Activated naive CD4-positive, alpha-beta T cell treated with anti-CD3 and anti-CD28 coated beads for 36 hours (primary cell): ENCODE measurements at regions of chr3 and their contacts with region 1.

Region 1: DNA sequence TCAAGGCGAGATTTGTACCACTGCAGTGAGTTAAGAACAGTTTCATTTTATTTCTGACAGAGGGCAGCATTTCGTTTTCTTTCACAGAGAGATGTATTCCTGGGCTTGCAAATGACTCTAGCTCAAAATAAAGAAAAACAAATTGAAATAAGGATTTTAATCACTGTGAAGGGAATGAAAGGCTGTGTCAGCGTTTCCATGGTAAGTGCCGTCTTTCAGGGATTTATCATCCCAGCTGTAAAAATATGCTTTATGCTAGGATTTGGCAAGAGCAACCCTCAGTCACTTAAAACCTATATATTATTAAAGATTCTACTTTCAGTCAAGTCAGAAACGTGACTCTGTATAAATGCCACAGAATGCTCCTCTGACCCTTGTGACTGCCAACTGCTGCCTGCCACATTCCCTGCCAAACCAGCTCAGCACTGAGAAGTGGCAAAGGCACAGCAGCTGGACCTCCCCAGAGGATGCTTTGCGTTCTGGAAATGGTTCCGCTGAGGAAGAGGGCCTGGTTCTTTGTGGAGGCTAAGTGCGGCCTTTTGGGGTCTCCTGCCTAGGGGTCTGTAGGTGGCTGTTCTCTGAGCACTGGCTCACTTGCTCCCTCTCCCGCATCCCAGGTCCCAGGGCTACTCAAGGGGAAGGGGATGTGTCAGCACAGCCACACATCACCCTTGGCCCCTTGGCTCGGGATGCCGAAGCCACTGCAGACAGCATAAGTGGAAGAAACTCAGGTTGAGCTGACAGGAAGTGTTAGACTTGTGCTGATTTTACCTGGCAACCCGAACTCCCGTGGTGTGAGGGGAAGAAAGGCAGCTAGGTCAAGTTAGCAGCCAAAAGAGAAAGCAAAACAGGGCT is 56.6 kb upstream of the POMGNT2 start:
- DNase-seq: peak; percentile 69
- H3K4me3 Mint-ChIP-seq: peak overlapping the region; percentile 58
- H3K27ac Mint-ChIP-seq: peak overlapping the region; percentile 69
- H3K4me1 Mint-ChIP-seq: peaks cover 18% of the 10 kb centered on the region
- H3K27me3 Mint-ChIP-seq: no peaks in the 10 kb centered on the region

Region 2: GRCh38 chr3:43181202-43181821 is 18.9 kb after region 1 on chr3:
- CTCF ChIA-PET with region 1: interaction called, 7 read pairs
- intact Hi-C with region 1: loop called (anchors 1 kb)
- DNase-seq: peak; percentile 86
- H3K4me3 Mint-ChIP-seq: no peak overlapping the region
- H3K27ac Mint-ChIP-seq: peak overlapping the region; percentile 56
- H3K4me1 Mint-ChIP-seq: peaks cover 43% of the 10 kb centered on the region
- H3K27me3 Mint-ChIP-seq: no peaks in the 10 kb centered on the region

Region 3: GRCh38 chr3:43223670-43224364 is 61.4 kb after region 1 on chr3:
- CTCF ChIA-PET with region 1: no interaction called
- intact Hi-C with region 1: loop called (anchors 2 kb)
- DNase-seq: no peak
- H3K4me3 Mint-ChIP-seq: no peak overlapping the region
- H3K27ac Mint-ChIP-seq: no peak overlapping the region
- H3K4me1 Mint-ChIP-seq: peaks cover 49% of the 10 kb centered on the region
- H3K27me3 Mint-ChIP-seq: no peaks in the 10 kb centered on the region

Region 4: DNA sequence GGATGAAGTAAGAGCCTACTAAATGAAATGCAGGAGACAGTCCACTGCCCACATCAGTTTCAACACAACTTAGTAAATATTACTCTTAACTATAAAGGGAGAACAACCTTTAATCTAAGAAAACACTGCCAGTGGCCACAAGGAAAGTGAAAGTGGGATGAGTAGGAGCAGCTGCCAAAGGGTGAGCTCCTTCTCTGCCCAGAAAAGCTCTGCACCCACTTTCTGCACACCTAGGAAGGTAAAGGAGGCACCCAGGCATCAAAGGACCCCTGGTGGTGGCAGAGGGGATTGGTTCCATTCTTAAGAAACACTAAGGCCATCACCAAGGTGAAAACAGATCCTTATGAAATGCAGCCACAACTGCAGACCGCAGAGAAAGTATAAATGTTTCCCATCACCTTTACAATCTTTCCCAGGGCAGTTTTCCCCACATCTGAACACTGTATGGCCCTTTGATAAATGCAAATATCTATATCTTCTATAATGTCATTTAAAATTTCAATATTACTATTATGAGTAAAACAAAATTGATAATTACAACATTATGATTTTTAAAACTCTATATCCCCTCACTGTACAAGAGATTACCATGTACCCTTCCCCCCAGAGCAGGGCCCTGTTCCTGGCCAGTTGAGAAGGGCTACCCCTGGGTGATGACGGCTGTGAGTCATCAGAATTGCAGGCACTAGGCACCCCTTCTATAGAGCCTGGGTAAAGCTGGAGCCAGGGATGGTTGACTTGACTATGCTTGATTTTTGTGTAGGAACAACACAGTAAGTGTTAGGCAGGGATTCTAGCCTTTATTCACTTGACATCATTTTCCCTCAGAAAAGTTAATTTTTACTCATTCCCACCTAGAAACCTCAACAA is 215.8 kb after region 1 on chr3:
- CTCF ChIA-PET with region 1: interaction called, 15 read pairs
- intact Hi-C with region 1: loop called (anchors 1 kb)
- DNase-seq: peak; percentile 84
- H3K4me3 Mint-ChIP-seq: no peak overlapping the region
- H3K27ac Mint-ChIP-seq: no peak overlapping the region
- H3K4me1 Mint-ChIP-seq: peaks cover 12% of the 10 kb centered on the region
- H3K27me3 Mint-ChIP-seq: no peaks in the 10 kb centered on the region

Region 5: DNA sequence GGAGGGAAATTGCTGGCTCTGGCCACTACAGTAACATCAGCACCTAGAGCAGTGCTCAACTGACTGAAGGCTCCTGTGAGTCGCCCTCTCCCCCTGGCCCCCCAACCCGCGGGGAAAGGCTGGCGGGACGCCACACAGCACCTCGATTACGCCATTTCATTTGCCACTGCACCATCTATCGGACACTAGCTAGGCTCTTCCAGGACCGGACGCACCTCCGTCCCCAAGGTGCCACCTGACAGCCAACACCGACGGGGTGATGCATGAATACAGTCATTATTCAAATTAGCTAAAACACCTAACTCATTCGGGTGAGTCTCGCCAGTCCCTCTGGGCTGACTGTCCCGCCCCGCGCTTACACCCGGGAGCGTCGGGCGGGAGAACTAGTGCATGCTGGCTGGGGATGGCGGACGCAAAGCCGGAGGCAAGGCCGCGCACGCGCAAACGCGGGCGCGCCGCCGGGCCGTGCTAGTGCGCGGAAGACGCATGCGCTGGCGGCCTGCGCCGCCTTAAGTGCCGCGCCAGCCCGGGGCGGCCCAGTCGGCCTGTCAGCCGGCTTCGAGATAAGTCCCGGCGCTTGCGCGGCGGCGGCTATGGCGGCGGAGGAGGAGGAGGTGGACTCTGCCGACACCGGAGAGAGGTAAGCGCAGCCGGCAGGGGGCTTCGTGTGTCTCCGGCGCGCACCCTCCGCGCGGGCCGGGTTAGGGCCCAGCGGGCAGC is 528.1 kb after region 1 on chr3 and contains the start of gene ABHD5:
- CTCF ChIA-PET with region 1: no interaction called
- intact Hi-C with region 1: loop called (anchors 5 kb)
- DNase-seq: peak; percentile 85
- H3K4me3 Mint-ChIP-seq: peak within 1 kb of the TSS; percentile 83
- H3K27ac Mint-ChIP-seq: peak within 1 kb of the TSS; percentile 85
- H3K4me1 Mint-ChIP-seq: peaks cover 31% of the 10 kb centered on the region
- H3K27me3 Mint-ChIP-seq: no peaks in the 10 kb centered on the region
- total RNA-seq, gene ABHD5: 9.4 to 11.0 TPM

Region 6: DNA sequence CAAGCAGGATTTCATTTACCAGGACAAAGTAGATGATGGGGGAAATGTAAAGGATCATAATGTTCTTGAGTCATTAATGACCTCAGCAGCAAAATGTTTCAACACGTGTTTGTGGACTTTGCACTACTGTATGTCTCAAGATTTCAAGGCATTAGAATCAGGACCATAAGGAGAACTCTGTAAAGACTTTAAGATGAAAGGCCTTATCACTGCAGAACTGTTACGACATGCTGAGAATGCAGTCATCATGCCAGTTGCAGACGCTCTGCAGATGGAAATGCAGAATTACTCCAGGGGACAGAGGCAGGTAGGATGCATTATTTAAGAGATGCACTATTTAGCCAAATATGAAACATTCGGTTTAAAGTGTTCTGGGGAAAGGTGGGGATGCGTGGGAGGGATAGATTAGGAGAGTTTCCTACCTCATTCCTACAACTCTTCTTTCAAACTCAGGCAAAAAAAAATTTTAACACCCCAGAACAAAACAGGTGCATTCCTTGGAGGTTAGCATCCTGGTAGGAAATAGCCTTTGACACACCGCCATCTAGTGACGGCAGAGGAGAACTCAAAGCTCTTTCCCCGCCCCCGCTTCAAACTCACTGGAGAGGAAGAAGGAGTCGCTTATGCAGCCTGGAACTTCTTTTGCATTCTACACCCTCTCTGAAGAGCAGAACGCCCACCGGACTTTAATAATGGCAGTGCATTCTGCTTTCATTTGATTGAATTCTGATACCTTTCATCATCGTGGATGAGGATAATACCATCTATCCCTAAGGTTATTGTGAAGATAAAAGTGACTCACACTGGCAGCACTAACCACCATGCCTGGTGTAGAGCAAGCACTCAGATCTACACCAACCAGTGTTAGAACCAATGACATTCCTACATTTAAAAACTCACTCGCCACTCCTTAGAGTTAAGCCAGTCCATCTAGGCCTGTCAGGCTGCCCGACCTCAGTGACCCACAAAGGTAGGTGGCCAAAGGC is 1036.1 kb after region 1 on chr3:
- CTCF ChIA-PET with region 1: no interaction called
- intact Hi-C with region 1: loop called (anchors 2 kb)
- DNase-seq: peak; percentile 87
- H3K4me3 Mint-ChIP-seq: no peak overlapping the region
- H3K27ac Mint-ChIP-seq: no peak overlapping the region
- H3K4me1 Mint-ChIP-seq: no peaks in the 10 kb centered on the region
- H3K27me3 Mint-ChIP-seq: peaks cover 8% of the 10 kb centered on the region